Activated CD4-positive, alpha-beta T cell treated with anti-CD3 and anti-CD28 coated beads for 36 hours (primary cell): ENCODE measurements at regions of chr20 and their contacts with region 1.

Region 1: DNA sequence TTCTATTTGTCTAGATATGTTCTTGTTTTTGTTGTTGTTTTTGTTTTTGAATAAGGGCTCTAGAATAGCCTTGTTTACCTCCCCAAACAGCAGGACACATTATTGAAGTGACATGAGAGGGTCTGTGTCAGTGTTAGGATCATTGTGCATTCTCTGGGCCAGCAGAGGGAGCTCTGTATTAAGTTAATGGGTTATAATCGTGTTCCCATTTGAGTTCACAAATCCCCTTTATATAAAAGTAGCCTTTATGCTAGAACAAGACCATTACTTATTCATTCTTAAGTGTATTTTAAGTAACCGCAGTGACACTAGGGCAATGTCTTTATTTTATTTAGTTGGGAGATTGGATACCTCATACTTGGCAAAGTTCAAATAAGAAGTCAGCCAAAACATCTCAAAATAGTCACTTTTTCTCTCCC is 44.8 kb downstream of the STK4 start:
- DNase-seq: peak; percentile 70
- ATAC-seq: peak; percentile 72
- H3K4me3 Mint-ChIP-seq: no peak overlapping the region
- H3K27ac Mint-ChIP-seq: peak overlapping the region; percentile 10
- H3K4me1 Mint-ChIP-seq: peaks cover 59% of the 10 kb centered on the region
- H3K27me3 Mint-ChIP-seq: no peaks in the 10 kb centered on the region

Region 2: DNA sequence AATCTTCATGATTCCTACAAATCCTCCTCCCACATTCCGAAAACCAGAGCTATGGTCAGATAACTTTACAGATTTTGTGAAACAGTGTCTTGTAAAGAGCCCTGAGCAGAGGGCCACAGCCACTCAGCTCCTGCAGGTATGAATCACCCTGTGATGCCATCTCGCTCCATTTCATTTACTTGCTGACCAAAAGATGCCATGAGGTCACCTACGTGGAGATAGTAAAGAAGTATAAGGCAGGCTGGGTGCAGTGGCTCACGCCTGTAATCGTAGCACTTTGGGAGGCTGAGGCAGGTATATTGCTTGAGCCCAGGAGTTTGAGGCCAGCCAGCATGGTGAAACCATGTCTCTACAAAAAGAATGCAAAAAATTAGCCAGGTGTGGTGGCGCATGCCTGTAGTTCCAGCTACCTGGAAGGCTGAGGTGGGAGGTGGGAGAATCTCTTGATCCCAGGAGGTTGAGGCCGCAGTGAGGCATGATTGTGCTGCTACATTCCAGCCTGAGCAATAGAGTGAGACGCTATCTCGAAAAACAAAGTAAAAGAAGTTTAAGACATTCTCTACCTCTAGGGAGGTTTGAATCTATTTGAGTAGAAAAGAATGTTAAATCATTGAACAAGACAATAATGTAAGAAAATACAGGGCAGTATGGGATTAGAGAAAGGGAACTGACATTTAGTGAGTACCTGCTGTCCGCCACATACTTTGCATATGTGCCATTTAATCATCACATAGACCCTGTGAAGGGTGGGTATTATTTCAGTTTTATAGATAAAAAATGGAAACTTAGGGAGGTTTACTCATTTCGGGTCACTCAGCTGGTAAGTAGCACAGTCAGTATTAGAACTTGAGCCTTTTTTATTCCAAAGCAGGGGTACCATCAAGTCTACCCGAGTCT is 13.7 kb before region 1 on chr20:
- CTCF ChIA-PET with region 1: interaction called, 14 read pairs
- POLR2A ChIA-PET with region 1: no interaction called
- intact Hi-C with region 1: no loop called
- DNase-seq: no peak
- ATAC-seq: peak; percentile 16
- H3K4me3 Mint-ChIP-seq: no peak overlapping the region
- H3K27ac Mint-ChIP-seq: peak overlapping the region; percentile 66
- H3K4me1 Mint-ChIP-seq: peaks cover 59% of the 10 kb centered on the region
- H3K27me3 Mint-ChIP-seq: no peaks in the 10 kb centered on the region

Region 3: GRCh38 chr20:45028424-45029136 is 17.5 kb after region 1 on chr20:
- CTCF ChIA-PET with region 1: interaction called, 22 read pairs
- POLR2A ChIA-PET with region 1: no interaction called
- intact Hi-C with region 1: no loop called
- DNase-seq: peak; percentile 23
- ATAC-seq: peak; percentile 44
- H3K4me3 Mint-ChIP-seq: no peak overlapping the region
- H3K27ac Mint-ChIP-seq: peak overlapping the region; percentile 86
- H3K4me1 Mint-ChIP-seq: peaks cover 75% of the 10 kb centered on the region
- H3K27me3 Mint-ChIP-seq: no peaks in the 10 kb centered on the region

Region 4: GRCh38 chr20:45036044-45036755 is 25.1 kb after region 1 on chr20:
- CTCF ChIA-PET with region 1: interaction called, 15 read pairs
- POLR2A ChIA-PET with region 1: no interaction called
- intact Hi-C with region 1: no loop called
- DNase-seq: peak; percentile 83
- ATAC-seq: peak; percentile 89
- H3K4me3 Mint-ChIP-seq: no peak overlapping the region
- H3K27ac Mint-ChIP-seq: peak overlapping the region; percentile 95
- H3K4me1 Mint-ChIP-seq: peaks cover 80% of the 10 kb centered on the region
- H3K27me3 Mint-ChIP-seq: no peaks in the 10 kb centered on the region

Region 5: GRCh38 chr20:45229264-45230056 is 218.3 kb after region 1 on chr20:
- CTCF ChIA-PET with region 1: no interaction called
- POLR2A ChIA-PET with region 1: no interaction called
- intact Hi-C with region 1: loop called in 1 of 2 experiments (anchors 10 kb)
- DNase-seq: peak; percentile 82
- ATAC-seq: peak; percentile 71
- H3K4me3 Mint-ChIP-seq: no peak overlapping the region
- H3K27ac Mint-ChIP-seq: no peak overlapping the region
- H3K4me1 Mint-ChIP-seq: peaks cover 2% of the 10 kb centered on the region
- H3K27me3 Mint-ChIP-seq: peaks cover 37% of the 10 kb centered on the region